Esophagus muscularis mucosa (tissue), 4 donors: ENCODE measurements at regions of chr7 and their contacts with region 1.

Region 1: GRCh38 chr7:92633211-92633906 is 43.2 kb upstream of the FAM133B start:
- DNase-seq: no peak
- H3K4me3 ChIP-seq: peak overlapping the region in 2 of 4 donors; percentile 7 to 11
- H3K27ac ChIP-seq: peak overlapping the region; percentile 62 to 79 (median 68)
- H3K4me1 ChIP-seq: peaks cover 41 to 48% (median 45%) of the 10 kb centered on the region in 4 donors
- H3K27me3 ChIP-seq: no peaks in the 10 kb centered on the region
- CTCF ChIP-seq: no peak
- EP300 ChIP-seq: no peak
- POLR2A ChIP-seq: no peak

Region 2: GRCh38 chr7:92075434-92076158 is 557.8 kb before region 1 on chr7:
- intact Hi-C with region 1: no loop called
- DNase-seq: no peak
- H3K4me3 ChIP-seq: no peak overlapping the region
- H3K27ac ChIP-seq: no peak overlapping the region
- H3K4me1 ChIP-seq: no peaks in the 10 kb centered on the region
- H3K27me3 ChIP-seq: no peaks in the 10 kb centered on the region
- CTCF ChIP-seq: no peak
- EP300 ChIP-seq: no peak
- POLR2A ChIP-seq: no peak

Region 3: DNA sequence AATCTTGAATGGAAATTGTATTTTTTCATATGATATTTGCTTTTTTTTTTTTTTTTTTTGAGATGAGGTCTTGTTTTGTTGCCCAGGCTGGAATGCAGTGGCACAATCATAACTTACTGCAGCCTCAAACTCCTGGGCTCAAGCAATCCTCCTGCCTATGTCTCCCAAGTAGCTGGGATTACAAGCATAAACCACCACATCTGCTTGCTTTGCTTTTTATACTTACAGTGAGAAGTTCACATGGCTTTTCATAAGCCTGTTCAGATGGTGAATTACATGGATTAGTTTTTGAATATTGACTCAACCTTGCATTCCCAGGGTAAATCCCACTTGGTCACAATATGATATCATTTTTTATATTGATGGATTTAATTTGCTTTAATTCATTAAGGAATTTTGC is 476.4 kb before region 1 on chr7:
- intact Hi-C with region 1: no loop called
- DNase-seq: no peak
- H3K4me3 ChIP-seq: no peak overlapping the region
- H3K27ac ChIP-seq: no peak overlapping the region
- H3K4me1 ChIP-seq: no peaks in the 10 kb centered on the region
- H3K27me3 ChIP-seq: no peaks in the 10 kb centered on the region
- CTCF ChIP-seq: no peak
- EP300 ChIP-seq: no peak
- POLR2A ChIP-seq: no peak

Region 4: DNA sequence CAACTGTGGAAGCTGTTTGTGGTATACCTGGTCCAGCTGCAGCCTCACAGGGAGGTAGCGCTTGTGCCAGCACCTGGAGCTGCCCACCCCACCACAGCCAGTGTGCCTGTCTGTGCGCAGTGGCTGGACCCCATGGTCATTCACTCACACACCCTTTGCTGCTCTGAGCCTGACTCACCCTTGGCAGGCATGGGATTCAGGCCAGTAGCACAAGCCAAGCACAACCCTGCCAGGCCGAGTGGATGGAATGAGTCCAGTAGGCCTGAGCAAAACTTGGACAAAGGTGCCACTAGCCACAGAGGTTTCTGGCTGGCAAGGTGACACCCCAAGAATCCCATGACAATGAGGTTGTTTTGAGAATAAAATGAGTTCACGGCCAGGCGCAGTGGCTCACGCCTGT is 85.8 kb before region 1 on chr7:
- intact Hi-C with region 1: no loop called
- DNase-seq: no peak
- H3K4me3 ChIP-seq: no peak overlapping the region
- H3K27ac ChIP-seq: no peak overlapping the region
- H3K4me1 ChIP-seq: no peaks in the 10 kb centered on the region
- H3K27me3 ChIP-seq: peaks cover 0 to 11% (median 0%) of the 10 kb centered on the region in 4 donors
- CTCF ChIP-seq: no peak
- EP300 ChIP-seq: no peak
- POLR2A ChIP-seq: no peak

Region 5: DNA sequence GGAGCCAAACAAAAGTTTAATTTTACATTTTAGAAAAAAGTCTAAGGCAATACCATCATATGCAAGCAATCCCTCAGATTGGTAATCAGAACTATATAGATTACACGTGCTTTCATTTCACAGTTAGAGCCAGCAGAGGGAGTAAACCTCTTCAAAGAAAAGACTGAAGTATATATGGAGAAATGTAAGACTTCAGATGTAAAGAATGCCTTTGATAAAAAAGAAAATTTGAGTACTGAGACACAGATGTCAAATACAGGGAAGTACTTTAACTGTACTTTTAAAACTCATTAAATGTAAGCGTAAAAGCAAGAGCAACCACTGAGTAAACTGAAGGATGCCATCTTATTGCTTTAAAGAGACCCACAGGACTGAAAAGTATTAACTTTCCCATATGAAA is 58.2 kb after region 1 on chr7:
- intact Hi-C with region 1: loop called (anchors 5 kb)
- DNase-seq: no peak
- H3K4me3 ChIP-seq: no peak overlapping the region
- H3K27ac ChIP-seq: no peak overlapping the region
- H3K4me1 ChIP-seq: peaks cover 4 to 39% (median 26%) of the 10 kb centered on the region in 4 donors
- H3K27me3 ChIP-seq: no peaks in the 10 kb centered on the region
- CTCF ChIP-seq: peak; percentile 42 to 59 (median 59)
- EP300 ChIP-seq: no peak
- POLR2A ChIP-seq: no peak